Naive thymus-derived CD4-positive, alpha-beta T cell (primary cell): ENCODE measurements at regions of chr7 and their contacts with region 1.

Region 1: DNA sequence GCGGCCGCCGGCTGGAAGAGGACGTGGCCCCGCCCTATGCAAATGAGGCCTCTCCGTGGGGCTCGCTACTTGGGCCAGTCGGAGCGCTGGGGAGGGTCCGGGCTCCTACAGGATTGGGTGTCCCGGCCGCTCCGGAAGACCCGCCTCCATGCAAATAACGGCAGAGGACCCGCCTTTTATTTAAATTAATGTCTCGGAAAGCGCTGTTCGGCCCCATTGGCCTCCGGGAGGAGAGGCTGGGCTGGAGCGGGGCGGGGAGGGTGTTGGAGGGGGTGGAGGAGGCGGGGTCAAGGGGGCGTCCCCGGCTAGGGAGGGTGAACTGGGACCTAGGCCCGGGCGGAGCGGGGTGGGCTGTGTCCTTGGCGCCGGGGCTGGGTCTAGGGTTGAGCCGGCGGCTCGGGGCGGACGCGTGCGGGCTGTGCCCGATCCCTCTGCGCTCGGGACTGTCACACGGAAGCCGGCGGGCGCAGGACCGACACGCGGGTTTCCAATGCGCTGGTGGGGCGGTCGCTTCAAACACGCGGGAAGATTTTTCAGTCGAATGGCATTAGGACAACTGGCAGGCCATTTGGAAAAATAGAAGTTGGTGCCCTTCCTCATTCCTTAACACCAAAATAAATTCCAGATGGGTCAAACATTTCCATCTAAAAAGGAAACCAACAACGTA is 344 bp upstream of the POLM start:
- DNase-seq: peak; percentile 88 to 99 (median 98)
- ATAC-seq: peak; percentile 96
- H3K4me3 ChIP-seq: peak overlapping the region; percentile 59
- H3K4me3 Mint-ChIP-seq: peak overlapping the region; percentile 79 to 91 (median 87)
- H3K27ac ChIP-seq: peak overlapping the region; percentile 92
- H3K27ac Mint-ChIP-seq: peak overlapping the region; percentile 44 to 95 (median 80)
- H3K4me1 ChIP-seq: peaks cover 15 to 16% of the 10 kb centered on the region in 2 donors
- H3K4me1 Mint-ChIP-seq: peaks cover 11 to 30% (median 18%) of the 10 kb centered on the region in 7 donors
- H3K27me3 ChIP-seq: no peaks in the 10 kb centered on the region
- H3K27me3 Mint-ChIP-seq: peaks cover 0 to 4% (median 0%) of the 10 kb centered on the region in 5 donors

Region 2: DNA sequence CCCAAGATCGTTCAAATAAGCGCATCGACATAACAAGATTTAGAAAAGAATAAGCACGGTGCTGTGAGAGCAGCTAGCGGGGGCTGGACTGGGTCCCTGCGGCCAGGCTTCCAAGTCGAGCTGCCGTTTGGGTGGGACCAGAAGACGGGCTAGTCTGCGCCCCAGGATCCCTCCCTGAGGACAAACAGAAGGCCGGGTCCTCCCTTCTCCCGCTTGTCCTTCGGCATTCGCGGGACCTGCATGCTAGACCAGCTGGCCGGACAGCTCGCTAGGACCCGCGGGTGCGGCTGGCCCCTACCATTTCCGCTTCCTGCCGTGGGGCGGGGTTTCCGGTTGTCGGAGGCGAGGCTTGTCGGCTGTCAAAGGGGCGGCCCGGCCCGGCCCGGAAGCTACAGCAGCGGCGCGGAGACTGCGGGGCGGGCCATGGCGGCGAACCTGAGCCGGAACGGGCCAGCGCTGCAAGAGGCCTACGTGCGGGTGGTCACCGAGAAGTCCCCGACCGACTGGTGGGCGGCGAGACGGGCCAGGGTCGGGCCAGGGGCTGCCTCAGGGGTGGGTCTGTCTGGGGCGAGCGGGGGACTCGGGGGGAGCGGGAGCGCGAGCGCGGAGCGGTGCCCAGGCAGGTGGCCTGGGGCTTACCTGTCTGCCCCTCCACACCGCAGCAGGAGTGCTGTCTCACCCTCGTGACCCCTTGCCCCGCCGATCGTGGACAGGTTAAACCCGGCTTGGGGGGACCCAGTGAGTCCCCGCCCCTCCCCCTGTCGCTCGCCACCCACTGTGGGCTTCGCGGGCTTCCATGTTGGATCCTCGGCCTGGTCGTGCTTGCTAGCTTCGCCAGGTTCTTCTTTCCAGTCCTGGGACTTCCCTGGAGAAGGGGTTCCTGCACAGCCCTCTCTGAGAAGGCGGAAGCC is 38.1 kb before region 1 on chr7 and contains the start of gene DBNL:
- CTCF ChIA-PET with region 1: no interaction called
- POLR2A ChIA-PET with region 1: interaction called, 16 read pairs
- intact Hi-C with region 1: loop called (anchors 1 kb)
- DNase-seq: peak; percentile 79 to 96 (median 84)
- ATAC-seq: peak; percentile 68
- H3K4me3 ChIP-seq: peak within 1 kb of the TSS; percentile 87
- H3K4me3 Mint-ChIP-seq: peak within 1 kb of the TSS; percentile 84 to 97 (median 92)
- H3K27ac ChIP-seq: peak within 1 kb of the TSS; percentile 93
- H3K27ac Mint-ChIP-seq: peak within 1 kb of the TSS; percentile 86 to 99 (median 96)
- H3K4me1 ChIP-seq: peaks cover 23 to 41% of the 10 kb centered on the region in 2 donors
- H3K4me1 Mint-ChIP-seq: peaks cover 38 to 60% (median 55%) of the 10 kb centered on the region in 7 donors
- H3K27me3 ChIP-seq: no peaks in the 10 kb centered on the region
- H3K27me3 Mint-ChIP-seq: no peaks in the 10 kb centered on the region
- total RNA-seq, gene DBNL: 112 to 182 (median 164) TPM

Region 3: GRCh38 chr7:44103923-44104859 is 21.5 kb after region 1 on chr7 and contains the start of gene AEBP1:
- CTCF ChIA-PET with region 1: no interaction called
- POLR2A ChIA-PET with region 1: interaction called, 4 read pairs
- intact Hi-C with region 1: loop called in 1 of 2 experiments (anchors 2 kb)
- DNase-seq: peak in 8 of 9 donors; percentile 16 to 51 (median 34)
- ATAC-seq: peak; percentile 62
- H3K4me3 ChIP-seq: peak within 1 kb of the TSS; percentile 53
- H3K4me3 Mint-ChIP-seq: peak within 1 kb of the TSS; percentile 69 to 91 (median 82)
- H3K27ac ChIP-seq: peak within 1 kb of the TSS; percentile 72
- H3K27ac Mint-ChIP-seq: peak within 1 kb of the TSS; percentile 55 to 93 (median 89)
- H3K4me1 ChIP-seq: no peaks in the 10 kb centered on the region
- H3K4me1 Mint-ChIP-seq: peaks cover 7 to 28% (median 16%) of the 10 kb centered on the region in 7 donors
- H3K27me3 ChIP-seq: no peaks in the 10 kb centered on the region
- H3K27me3 Mint-ChIP-seq: peaks cover 0 to 24% (median 0%) of the 10 kb centered on the region in 5 donors
- total RNA-seq, gene AEBP1: 7.7 to 33.1 (median 27.5) TPM

Region 4: DNA sequence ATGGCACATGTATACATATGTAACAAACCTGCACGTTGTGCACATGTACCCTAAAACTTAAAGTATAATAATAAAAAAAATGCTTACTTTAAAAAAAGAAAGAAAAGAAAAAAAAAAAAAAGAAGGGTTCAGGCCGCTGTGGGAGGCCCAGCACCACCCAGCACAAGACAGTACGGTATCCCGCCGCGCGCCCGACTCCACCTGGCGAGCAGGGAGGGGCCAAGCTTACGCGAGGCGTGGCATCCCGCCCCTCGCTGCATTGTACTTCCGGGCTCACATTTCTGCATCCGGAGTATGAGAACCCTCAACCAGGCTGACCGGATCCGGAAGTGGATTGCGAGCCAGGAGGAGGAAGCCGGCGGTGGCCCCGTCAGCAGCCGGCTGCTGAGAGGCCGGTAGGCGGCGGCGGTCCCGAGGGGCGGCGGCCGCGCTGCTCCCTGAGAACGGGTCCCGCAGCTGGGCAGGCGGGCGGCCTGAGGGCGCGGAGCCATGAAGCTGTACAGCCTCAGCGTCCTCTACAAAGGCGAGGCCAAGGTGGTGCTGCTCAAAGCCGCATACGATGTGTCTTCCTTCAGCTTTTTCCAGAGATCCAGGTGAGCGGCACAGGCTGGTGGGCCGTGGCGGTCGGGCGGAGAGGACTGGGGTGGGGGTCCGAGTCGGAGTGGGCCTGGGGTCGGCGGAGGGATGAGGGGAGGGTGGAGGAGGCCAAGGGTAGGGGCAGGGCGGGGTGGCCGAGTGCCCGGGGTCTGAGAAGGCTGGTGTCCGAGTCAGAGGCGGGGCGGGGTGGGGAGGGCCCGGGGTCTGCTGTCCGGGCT is 118.2 kb after region 1 on chr7 and contains the start of gene YKT6:
- CTCF ChIA-PET with region 1: interaction called, 3 read pairs
- POLR2A ChIA-PET with region 1: interaction called, 3 read pairs
- intact Hi-C with region 1: loop called (anchors 1 kb)
- DNase-seq: peak; percentile 73 to 94 (median 93)
- ATAC-seq: peak; percentile 99
- H3K4me3 ChIP-seq: peak within 1 kb of the TSS; percentile 95
- H3K4me3 Mint-ChIP-seq: peak within 1 kb of the TSS; percentile 81 to 90 (median 85)
- H3K27ac ChIP-seq: peak within 1 kb of the TSS; percentile 91
- H3K27ac Mint-ChIP-seq: peak within 1 kb of the TSS; percentile 19 to 88 (median 63)
- H3K4me1 ChIP-seq: peaks cover 15 to 16% of the 10 kb centered on the region in 2 donors
- H3K4me1 Mint-ChIP-seq: peaks cover 24 to 38% (median 32%) of the 10 kb centered on the region in 7 donors
- H3K27me3 ChIP-seq: no peaks in the 10 kb centered on the region
- H3K27me3 Mint-ChIP-seq: peaks cover 0 to 7% (median 3%) of the 10 kb centered on the region in 5 donors
- total RNA-seq, gene YKT6: 58.1 to 80.9 (median 62.3) TPM

Region 5: DNA sequence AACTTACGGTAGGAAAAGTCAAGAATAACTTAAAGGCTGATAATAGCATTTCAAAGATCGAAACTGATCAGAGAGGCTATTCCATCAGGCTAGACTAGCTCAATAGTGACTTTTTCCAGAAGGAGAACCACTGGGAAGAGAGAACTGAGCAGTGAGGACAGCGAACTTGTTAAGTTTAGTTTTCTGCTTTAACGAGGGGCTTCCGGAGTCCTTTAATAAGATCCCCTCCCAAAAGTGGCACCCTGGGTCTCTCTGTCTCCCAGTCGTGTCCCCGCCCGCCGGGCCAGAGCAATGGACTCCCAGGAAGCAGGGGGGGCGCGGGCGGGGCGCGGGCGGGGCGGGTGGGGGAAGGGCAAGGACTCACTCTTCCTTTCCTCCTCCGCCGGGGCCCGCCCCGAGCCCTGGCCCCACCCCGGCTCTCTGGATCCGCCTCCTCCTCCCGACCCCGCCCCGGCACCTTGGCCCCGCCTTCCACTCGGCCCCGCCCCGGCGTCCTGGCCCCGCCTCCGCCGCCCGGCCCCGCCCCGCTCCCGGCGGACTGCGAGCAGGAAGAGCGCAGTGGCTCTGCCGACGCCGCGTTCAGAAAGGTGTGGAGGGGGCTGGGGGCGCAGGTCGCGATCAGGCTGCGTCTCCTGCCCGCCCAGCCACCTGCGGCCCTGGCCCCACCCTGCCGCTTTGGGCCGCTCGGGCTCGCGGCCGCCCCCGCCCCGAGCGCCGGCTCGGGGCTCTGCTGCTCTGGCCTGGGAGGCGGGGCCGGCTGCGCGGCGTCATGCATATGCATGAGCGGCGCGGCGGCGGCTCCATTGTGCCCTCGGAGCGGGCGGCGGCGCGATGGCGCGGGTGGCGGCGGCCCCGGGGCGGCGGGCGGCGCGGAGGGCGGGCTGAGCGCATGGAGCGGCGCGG is 665.6 kb after region 1 on chr7 and contains the start of gene ZMIZ2:
- CTCF ChIA-PET with region 1: no interaction called
- POLR2A ChIA-PET with region 1: interaction called, 3 read pairs
- intact Hi-C with region 1: loop called in 1 of 2 experiments (anchors 1 kb)
- DNase-seq: peak; percentile 87 to 99 (median 93)
- ATAC-seq: peak; percentile 94
- H3K4me3 ChIP-seq: peak within 1 kb of the TSS; percentile 64
- H3K4me3 Mint-ChIP-seq: peak within 1 kb of the TSS; percentile 77 to 92 (median 88)
- H3K27ac ChIP-seq: peak within 1 kb of the TSS; percentile 98
- H3K27ac Mint-ChIP-seq: peak within 1 kb of the TSS; percentile 81 to 98 (median 92)
- H3K4me1 ChIP-seq: peaks cover 21 to 22% of the 10 kb centered on the region in 2 donors
- H3K4me1 Mint-ChIP-seq: peaks cover 22 to 63% (median 45%) of the 10 kb centered on the region in 7 donors
- H3K27me3 ChIP-seq: no peaks in the 10 kb centered on the region
- H3K27me3 Mint-ChIP-seq: no peaks in the 10 kb centered on the region
- total RNA-seq, gene ZMIZ2: 108 to 187 (median 144) TPM

Region 6: DNA sequence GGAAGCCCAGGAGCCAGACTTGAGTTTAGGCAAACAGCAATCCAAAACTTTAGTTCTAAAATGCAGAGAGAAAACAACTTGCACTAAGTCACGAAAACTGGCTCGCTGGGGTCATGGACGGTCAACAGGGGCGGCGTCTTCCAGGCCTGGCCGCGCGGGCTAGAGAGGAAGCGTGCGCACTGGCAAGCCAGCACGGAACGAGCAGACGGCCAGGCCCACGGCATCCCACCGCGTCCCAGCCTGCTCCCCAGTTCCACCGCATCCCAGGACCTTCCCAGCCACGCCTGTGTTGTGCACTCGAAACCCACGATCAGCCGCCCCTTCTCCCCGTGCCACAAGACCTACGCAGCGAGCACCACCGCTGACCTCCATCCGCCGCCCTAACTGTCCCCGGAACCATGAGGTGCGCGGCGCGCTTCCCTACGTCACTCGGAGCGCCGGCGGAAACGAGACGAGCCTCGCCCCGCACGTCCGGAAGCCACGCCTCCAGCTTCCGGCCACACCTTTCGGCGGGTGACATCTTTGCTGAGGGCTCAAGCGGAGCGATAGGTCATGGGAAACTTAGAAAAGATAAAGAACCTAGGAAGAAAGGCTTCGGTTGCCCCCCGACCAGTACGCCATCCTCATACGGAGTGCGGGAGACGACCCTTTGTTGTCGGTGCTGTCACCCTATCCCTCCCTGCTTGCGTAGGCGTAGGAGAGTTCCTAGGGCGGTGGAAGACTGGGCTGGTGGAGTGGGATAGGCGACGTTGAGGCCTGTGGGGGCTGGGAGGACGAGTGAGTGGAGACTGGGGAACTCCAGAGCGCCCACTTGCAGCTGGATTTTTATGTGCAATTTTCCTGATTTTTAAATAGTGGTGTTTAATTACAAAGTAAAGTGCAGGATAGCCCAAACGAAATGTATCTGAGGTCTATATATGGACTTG is 1028.9 kb after region 1 on chr7 and contains the start of gene TBRG4:
- CTCF ChIA-PET with region 1: no interaction called
- POLR2A ChIA-PET with region 1: no interaction called
- intact Hi-C with region 1: loop called (anchors 5 to 10 kb)
- DNase-seq: peak; percentile 88 to 96 (median 94)
- ATAC-seq: peak; percentile 94
- H3K4me3 ChIP-seq: peak within 1 kb of the TSS; percentile 80
- H3K4me3 Mint-ChIP-seq: peak within 1 kb of the TSS; percentile 93 to 100 (median 96)
- H3K27ac ChIP-seq: peak within 1 kb of the TSS; percentile 98
- H3K27ac Mint-ChIP-seq: peak within 1 kb of the TSS; percentile 98 to 100 (median 99)
- H3K4me1 ChIP-seq: peaks cover 17 to 45% of the 10 kb centered on the region in 2 donors
- H3K4me1 Mint-ChIP-seq: peaks cover 30 to 59% (median 50%) of the 10 kb centered on the region in 7 donors
- H3K27me3 ChIP-seq: no peaks in the 10 kb centered on the region
- H3K27me3 Mint-ChIP-seq: peaks cover 0 to 31% (median 0%) of the 10 kb centered on the region in 5 donors
- total RNA-seq, gene TBRG4: 93.7 to 143 (median 107) TPM